PC-9 (cell line): ENCODE measurements at regions of chr17 and their contacts with region 1.

Region 1: DNA sequence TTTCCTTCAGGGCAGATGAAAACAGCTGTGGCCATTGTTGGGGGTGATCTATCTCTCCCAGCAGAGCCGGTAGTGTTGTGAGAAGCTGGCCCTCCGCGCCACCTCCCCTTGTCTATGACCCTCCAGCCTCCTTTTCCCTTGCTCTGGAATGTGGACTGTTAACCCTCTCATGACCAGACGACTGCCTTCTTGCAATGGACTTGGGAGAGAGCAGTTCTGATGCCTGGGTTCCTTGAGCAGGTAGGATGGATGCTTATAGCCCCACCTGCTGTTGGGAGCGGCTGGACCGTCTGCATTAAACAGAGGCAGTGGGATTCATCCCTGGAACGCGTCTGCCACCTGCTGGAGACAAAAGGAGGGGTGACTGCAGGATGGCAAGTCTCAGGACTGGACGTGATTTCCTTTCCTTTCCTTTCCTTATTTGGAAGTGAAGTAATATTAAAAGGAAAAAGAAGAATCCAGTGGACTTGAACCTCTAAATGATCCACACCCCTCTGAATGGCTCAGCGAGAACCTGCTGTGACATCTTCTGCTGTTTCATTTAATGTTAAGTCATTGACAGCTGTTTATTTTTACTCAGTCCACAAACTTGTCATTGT is 1.8 kb upstream of the SOST start:
- DNase-seq: peak; percentile 77 to 92
- H3K4me3 ChIP-seq: no peak overlapping the region
- H3K27ac ChIP-seq: no peak overlapping the region
- H3K4me1 ChIP-seq: peaks cover 11% of the 10 kb centered on the region
- H3K27me3 ChIP-seq: no peaks in the 10 kb centered on the region
- CTCF ChIP-seq: peak; percentile 99

Region 2: GRCh38 chr17:43680461-43680860 is 79.9 kb before region 1 on chr17:
- CTCF ChIA-PET with region 1: interaction called, 11 read pairs
- POLR2A ChIA-PET with region 1: no interaction called
- intact Hi-C with region 1: no loop called
- DNase-seq: no peak
- H3K4me3 ChIP-seq: no peak overlapping the region
- H3K27ac ChIP-seq: no peak overlapping the region
- H3K4me1 ChIP-seq: peaks cover 9% of the 10 kb centered on the region
- H3K27me3 ChIP-seq: no peaks in the 10 kb centered on the region
- CTCF ChIP-seq: no peak

Region 3: DNA sequence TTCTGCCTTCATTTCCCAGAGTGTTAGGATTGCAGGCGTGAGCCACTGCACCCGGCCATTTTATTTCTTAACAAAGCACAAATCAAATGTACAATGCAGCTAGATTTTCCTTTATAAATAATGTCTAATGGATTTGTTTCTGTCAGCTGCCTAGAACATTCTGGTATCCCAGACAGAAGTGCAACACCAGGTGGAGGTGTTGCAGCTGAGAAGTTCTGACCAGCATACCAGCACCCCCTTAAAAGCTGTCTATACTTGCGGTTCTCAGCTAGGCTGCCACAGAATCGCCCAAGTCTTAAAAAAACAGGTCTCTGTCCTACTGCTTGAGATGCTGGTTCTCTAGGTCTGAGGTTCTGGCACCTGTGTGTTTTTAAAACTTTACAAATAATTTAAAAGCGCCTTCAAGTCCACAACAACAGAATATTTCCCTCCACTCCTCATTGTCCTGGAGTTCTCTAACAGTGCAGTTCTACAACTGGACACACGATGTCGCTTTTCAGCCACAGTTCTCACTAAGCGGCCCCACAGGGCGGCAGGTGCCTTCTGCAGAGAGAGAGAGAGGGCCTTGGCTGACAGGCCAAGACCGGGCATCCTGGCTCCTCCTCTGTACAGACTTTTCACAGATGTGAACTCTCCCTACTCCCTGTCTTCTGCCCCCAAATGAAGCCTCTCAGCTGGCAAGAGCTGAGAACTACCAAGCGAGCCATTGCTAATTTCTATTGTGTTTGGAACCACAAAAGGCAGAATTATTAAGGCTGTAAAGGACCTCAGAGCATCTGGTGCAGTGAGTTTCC is 66.1 kb before region 1 on chr17:
- CTCF ChIA-PET with region 1: interaction called, 24 read pairs
- POLR2A ChIA-PET with region 1: interaction called, 5 read pairs
- intact Hi-C with region 1: loop called (anchors 1 kb)
- DNase-seq: peak; percentile 68 to 72
- H3K4me3 ChIP-seq: no peak overlapping the region
- H3K27ac ChIP-seq: no peak overlapping the region
- H3K4me1 ChIP-seq: no peaks in the 10 kb centered on the region
- H3K27me3 ChIP-seq: no peaks in the 10 kb centered on the region
- CTCF ChIP-seq: peak; percentile 97